Sciatic nerve (tissue), 2 donors: ENCODE measurements at regions of chr14 and their contacts with region 1.

Region 1: DNA sequence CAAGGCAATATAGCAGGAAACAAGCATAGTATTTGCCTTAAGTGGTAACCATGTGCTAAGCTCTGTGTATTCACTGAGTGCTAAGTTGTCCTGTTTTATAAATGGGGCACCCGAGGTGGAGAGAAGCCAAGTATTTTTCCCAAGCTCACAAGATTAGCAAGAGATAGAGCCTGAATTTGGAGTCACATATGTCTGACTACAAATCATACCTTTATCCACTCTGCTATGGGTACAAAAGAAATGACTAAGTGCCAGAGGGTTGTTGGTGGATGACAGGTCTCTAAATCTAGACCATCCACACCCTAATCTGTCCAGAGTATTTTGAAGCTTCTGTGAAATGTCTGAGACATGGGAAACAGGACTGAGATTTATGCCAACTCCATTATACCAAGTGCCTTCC is 182.1 kb upstream of the SEL1L start:
- DNase-seq: no peak
- ATAC-seq: no peak

Region 2: GRCh38 chr14:81324018-81324417 is 391.7 kb before region 1 on chr14:
- intact Hi-C with region 1: loop called (anchors 5 kb)
- DNase-seq: no peak
- ATAC-seq: peak; percentile 22

Region 3: DNA sequence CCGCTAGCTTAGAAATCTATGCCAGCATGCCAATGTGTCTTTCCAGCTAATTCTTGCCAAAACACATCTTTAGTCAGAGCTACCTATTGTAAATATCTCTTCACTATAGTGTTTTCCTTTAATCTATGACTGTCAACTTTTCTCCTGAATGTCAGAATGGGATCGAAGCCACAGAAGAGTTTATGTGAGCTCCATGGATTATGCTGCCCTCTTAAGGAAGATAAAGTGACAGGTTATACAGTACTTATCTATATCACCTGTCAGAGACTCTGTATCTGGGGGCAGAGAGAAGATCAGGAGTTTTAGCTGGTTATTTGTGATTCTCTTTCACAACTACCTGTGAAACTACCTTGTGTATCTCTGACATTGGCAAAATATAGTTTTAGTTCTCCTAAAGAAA is 22.2 kb after region 1 on chr14:
- intact Hi-C with region 1: no loop called
- DNase-seq: no peak
- ATAC-seq: no peak